Kidney (tissue), 22 donors: ENCODE measurements at regions of chr16 and their contacts with region 1.

Region 1: DNA sequence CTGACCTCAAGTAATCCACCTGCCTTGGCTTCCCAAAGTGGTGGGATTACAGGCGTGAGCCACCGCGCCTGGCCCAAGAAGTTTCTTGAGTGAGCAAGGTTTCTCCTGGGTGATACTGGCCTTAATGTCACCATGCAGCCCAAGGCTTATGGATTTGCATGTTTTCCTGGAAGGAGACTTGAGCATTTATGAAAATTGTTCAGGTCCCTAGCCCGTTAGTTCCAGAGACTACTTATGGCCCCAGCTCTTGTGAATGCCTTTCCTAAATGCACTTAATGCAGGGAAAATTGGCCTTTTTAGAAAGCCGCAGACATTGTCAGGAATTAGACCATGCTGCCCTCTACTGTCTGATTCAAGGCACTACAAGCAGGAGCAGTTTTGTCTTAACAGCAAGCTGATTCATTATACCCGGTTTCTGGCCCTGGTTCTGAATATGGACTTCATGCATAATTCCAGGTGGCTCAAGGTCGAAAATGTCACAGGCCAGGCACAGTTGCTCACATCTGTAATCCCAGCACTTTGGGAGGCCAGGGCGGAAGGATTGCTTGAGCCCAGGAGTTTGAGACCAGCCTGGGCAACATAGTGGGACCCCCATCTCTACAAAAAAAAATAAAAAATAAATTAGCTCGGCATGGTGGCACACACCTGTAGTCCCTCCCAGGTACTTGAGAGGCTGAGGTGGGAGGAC is 91.3 kb downstream of the SNX29 start:
- DNase-seq: peak in 4 of 5 donors; percentile 32 to 92 (median 78)
- H3K4me3 ChIP-seq: no peak overlapping the region
- H3K27ac ChIP-seq: peak overlapping the region in 1 of 2 donors; percentile 36
- H3K4me1 ChIP-seq: peaks cover 0 to 20% (median 14%) of the 10 kb centered on the region in 3 donors
- H3K27me3 ChIP-seq: no peaks in the 10 kb centered on the region
- CTCF ChIP-seq: peak; percentile 98

Region 2: GRCh38 chr16:11955713-11956123 is 112.1 kb before region 1 on chr16:
- intact Hi-C with region 1: loop called (anchors 10 kb)
- DNase-seq: peak in 2 of 5 donors; percentile 29 to 30
- H3K4me3 ChIP-seq: no peak overlapping the region
- H3K27ac ChIP-seq: no peak overlapping the region
- H3K4me1 ChIP-seq: peaks cover 0 to 3% (median 2%) of the 10 kb centered on the region in 3 donors
- H3K27me3 ChIP-seq: no peaks in the 10 kb centered on the region
- CTCF ChIP-seq: no peak